ENCODE measurements at regions of chr7 and their contacts with region 1.

Region 1: GRCh38 chr7:128135515-128136214 is 104.4 kb upstream of the LRRC4 start:
- DNase-seq: peak; percentile 61
- H3K4me3 Mint-ChIP-seq: peak overlapping the region; percentile 56
- H3K27ac Mint-ChIP-seq: no peak overlapping the region
- H3K4me1 Mint-ChIP-seq: peaks cover 13% of the 10 kb centered on the region
- H3K27me3 Mint-ChIP-seq: peaks cover 61% of the 10 kb centered on the region

Region 2: DNA sequence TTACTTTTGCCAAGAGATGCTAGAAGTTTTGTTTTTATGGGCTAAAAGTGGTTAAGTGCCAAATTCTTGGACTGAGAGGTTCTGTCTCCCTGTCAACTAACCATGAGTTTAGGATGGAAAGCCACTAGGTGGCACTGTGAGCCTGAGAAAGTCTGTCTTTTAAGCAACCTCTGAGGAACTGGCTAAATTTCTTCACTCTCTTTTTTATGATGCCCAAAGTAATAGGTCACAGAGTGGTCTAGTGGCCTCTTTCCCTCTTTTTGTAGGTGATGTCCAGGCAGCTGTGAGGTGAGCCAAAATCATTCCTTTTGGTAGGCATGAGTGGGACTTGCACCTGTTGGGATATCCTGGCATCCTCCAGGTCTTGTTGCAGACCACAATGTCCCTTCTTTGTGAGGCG is 426.9 kb before region 1 on chr7:
- CTCF ChIA-PET with region 1: interaction called, 11 read pairs
- POLR2A ChIA-PET with region 1: no interaction called
- DNase-seq: peak; percentile 75
- H3K4me3 Mint-ChIP-seq: no peak overlapping the region
- H3K27ac Mint-ChIP-seq: peak overlapping the region; percentile 7
- H3K4me1 Mint-ChIP-seq: peaks cover 5% of the 10 kb centered on the region
- H3K27me3 Mint-ChIP-seq: no peaks in the 10 kb centered on the region

Region 3: DNA sequence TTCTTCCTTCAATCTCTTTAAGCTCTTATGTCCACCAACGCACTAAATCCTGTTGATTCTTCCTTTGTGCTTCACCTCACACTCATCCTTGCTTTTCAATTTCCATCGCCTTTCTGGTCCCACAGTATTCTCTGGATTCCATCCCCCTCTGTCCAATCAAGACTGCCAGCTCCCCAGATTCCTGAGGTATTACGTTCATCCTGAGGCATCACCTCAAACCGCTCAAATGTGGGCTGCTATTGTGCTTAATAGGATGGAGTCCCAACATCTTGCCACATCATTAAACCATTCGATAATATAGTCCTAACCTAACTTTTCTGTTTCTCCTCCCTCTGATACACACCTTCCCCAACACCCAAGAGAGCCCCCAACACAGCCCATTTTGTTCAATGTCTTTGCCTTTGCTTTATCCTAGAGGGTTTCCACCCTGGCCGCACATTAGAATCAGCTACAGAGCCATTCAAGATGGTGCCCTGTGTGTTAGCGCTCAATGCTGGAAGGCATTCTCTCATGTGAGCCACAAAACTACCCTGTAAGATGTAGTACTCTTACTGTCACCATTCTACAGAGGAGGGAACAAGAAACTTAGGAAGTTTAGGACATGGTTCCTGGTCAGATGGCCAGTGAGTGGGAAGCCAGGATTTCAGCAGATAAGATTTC is 25.9 kb after region 1 on chr7:
- CTCF ChIA-PET with region 1: interaction called, 10 read pairs
- POLR2A ChIA-PET with region 1: no interaction called
- DNase-seq: no peak
- H3K4me3 Mint-ChIP-seq: no peak overlapping the region
- H3K27ac Mint-ChIP-seq: no peak overlapping the region
- H3K4me1 Mint-ChIP-seq: no peaks in the 10 kb centered on the region
- H3K27me3 Mint-ChIP-seq: peaks cover 62% of the 10 kb centered on the region

Region 4: DNA sequence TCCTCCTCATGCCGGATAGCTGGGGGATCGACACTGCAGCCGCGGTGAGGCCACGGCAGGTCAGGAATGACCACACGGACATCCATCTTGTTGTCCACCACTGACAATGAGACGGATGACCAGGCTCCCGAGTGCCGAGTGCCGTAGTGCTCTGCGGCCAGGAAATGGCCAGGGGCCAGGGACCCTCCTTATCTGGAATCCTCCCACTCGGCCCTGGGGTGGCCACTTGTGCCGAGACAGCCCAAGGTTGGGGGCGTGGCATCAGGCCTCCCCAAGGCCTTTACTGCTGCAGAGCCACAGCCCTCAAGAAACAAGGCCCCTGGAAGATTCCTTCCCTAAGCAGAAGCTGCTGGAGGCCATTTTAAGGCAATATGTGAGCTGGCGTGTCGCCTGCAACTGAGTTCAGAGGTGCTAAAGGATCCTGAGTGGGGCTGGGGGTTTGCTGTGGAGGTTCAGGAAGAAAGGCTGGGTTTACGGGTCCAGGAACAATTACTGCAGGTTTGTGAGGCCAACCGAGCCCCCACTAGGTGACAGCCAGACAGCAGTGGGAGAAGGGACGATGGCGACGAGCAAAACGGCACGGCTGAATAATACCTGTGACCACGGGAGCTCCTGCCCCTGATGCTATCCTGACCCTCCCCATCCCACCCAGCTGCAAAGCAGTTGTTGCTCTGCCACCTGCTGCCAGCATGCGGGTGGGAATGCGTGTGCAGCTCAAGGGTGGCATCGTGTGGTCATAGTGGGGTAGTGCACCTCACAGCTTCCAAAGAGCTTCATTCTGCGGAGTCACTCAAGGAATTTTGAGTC is 73.8 kb after region 1 on chr7:
- CTCF ChIA-PET with region 1: interaction called, 129 read pairs
- POLR2A ChIA-PET with region 1: no interaction called
- DNase-seq: peak; percentile 70
- H3K4me3 Mint-ChIP-seq: no peak overlapping the region
- H3K27ac Mint-ChIP-seq: no peak overlapping the region
- H3K4me1 Mint-ChIP-seq: no peaks in the 10 kb centered on the region
- H3K27me3 Mint-ChIP-seq: peaks cover 20% of the 10 kb centered on the region